GM23248 (cell line): ENCODE measurements at regions of chr7 and their contacts with region 1.

Region 1: GRCh38 chr7:74653686-74654181 is 3.8 kb upstream of the GTF2I start:
- DNase-seq: no peak
- H3K4me3 ChIP-seq: no peak overlapping the region
- H3K27ac ChIP-seq: no peak overlapping the region
- H3K4me1 ChIP-seq: no peaks in the 10 kb centered on the region
- H3K27me3 ChIP-seq: no peaks in the 10 kb centered on the region

Region 2: GRCh38 chr7:74302745-74303221 is 351.0 kb before region 1 on chr7:
- in situ Hi-C with region 1: no loop called
- DNase-seq: peak; percentile 8
- H3K4me3 ChIP-seq: no peak overlapping the region
- H3K27ac ChIP-seq: no peak overlapping the region
- H3K4me1 ChIP-seq: peaks cover 11% of the 10 kb centered on the region
- H3K27me3 ChIP-seq: no peaks in the 10 kb centered on the region

Region 3: DNA sequence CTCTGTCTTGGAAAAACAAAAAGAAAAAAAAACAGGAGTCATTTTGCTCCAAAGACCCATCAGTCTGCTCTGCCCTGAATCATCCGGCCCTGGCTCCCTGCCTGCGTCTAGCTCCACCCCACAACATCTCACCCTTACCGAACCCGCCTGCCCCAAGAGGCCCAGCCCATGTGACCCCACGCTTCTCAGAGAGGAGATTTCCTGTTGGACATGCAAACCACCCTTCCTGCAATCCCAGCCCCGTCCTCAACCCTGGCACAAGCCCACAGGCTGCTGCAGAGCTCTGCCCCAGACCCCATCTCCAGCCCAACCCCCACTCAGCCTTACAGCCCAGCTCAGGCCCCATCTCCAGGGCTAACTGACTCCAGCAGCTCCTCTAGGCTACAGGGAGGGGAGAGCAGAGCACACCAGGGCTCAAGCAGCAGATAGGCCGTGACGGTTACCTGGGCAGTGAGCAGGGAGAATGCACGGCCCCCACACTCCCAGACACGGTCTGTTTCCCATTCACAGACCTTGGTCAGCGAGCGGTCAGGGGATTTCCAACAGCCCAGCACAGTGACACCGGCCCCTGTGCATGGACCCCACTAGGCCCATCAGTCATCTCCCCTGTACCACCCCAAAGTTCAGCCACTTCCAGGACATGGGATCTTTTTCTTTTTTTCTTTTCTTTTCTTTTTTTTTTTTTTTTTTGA is 66.2 kb before region 1 on chr7:
- in situ Hi-C with region 1: loop called (anchors 10 kb)
- DNase-seq: peak; percentile 94
- H3K4me3 ChIP-seq: peak overlapping the region; percentile 13; the same call in 1 of the 2 replicates
- H3K27ac ChIP-seq: peak overlapping the region; percentile 76
- H3K4me1 ChIP-seq: peaks cover 11% of the 10 kb centered on the region
- H3K27me3 ChIP-seq: no peaks in the 10 kb centered on the region

Region 4: DNA sequence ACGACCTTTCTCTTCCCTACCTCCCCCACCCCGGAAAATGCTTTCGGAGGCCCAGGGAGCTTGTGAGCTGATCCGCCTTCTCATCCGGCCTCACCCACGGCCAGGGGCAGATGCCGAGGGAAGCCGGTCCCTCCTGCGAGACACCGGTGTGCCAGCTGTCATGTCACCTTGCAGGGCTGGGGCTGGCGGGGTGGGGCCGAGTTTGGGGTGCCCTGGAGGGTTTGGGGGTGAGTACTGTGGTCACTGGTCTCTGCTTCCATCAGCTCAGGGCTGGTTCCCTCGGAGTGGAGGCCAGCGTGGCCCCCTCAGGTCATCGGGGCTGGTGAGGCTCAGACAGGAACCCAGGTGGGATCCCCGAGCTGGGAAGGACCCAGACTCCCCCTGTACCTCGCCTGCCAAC is 371.2 kb after region 1 on chr7:
- in situ Hi-C with region 1: no loop called
- DNase-seq: no peak
- H3K4me3 ChIP-seq: no peak overlapping the region
- H3K27ac ChIP-seq: no peak overlapping the region
- H3K4me1 ChIP-seq: no peaks in the 10 kb centered on the region
- H3K27me3 ChIP-seq: no peaks in the 10 kb centered on the region